A673 (cell line): ENCODE measurements at regions of chr12 and their contacts with region 1.

Region 1: GRCh38 chr12:13278249-13278787 is 81.8 kb downstream of the EMP1 start:
- DNase-seq: peak; percentile 74
- H3K4me3 ChIP-seq: no peak overlapping the region
- H3K27ac ChIP-seq: no peak overlapping the region
- H3K4me1 ChIP-seq: no peaks in the 10 kb centered on the region
- H3K27me3 ChIP-seq: peaks cover 78% of the 10 kb centered on the region
- CTCF ChIP-seq: peak; percentile 99

Region 2: DNA sequence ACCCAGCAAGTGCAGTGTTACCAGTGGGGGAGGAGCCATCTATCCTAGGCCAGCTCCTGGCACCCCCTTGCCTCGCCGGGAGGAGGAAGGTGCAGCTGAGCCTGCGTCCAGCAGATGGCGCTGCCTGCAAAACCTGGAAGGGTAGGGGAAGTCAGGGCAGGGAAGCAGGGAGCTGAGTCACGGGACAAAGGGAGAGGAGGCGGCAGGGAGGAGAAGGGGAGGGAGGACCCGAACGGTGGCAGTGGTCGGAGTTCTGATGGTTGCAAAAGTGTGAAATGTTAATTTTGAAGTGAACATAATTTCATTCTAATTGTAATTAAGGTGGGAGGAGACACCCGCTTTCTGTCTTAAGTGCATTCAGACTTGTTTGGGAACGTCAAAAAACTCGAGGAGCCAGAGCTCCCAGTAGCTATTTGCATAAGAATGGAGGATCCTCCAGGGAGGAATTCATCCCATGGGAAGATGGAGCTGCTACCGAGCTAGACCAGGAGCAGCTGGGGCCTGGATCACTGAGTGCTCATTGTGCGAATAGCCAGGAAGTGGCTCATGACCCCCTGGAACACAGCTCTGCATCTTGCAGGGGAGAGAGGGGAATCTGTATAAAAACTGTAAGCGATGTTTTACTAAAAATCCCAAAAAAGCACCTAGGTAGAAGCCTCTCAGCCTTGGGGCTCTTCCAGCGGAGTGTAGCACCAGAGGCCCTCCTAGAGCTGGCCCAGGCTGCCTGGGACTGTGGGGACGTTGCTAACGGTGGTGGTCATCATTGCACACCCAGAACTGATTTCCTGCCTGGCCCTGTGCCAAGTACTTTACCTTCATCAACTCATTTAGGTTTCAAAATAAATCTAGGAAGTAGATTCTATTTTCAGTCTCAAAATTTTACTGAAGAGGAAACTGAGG is 22.3 kb before region 1 on chr12:
- CTCF ChIA-PET with region 1: interaction called, 10 read pairs
- POLR2A ChIA-PET with region 1: no interaction called
- intact Hi-C with region 1: no loop called
- DNase-seq: peak; percentile 98
- H3K4me3 ChIP-seq: peak overlapping the region; percentile 35
- H3K27ac ChIP-seq: no peak overlapping the region
- H3K4me1 ChIP-seq: peaks cover 6% of the 10 kb centered on the region
- H3K27me3 ChIP-seq: no peaks in the 10 kb centered on the region
- CTCF ChIP-seq: peak; percentile 100